GM12878 (cell line): ENCODE measurements at regions of chr13 and their contacts with region 1.

Region 1: DNA sequence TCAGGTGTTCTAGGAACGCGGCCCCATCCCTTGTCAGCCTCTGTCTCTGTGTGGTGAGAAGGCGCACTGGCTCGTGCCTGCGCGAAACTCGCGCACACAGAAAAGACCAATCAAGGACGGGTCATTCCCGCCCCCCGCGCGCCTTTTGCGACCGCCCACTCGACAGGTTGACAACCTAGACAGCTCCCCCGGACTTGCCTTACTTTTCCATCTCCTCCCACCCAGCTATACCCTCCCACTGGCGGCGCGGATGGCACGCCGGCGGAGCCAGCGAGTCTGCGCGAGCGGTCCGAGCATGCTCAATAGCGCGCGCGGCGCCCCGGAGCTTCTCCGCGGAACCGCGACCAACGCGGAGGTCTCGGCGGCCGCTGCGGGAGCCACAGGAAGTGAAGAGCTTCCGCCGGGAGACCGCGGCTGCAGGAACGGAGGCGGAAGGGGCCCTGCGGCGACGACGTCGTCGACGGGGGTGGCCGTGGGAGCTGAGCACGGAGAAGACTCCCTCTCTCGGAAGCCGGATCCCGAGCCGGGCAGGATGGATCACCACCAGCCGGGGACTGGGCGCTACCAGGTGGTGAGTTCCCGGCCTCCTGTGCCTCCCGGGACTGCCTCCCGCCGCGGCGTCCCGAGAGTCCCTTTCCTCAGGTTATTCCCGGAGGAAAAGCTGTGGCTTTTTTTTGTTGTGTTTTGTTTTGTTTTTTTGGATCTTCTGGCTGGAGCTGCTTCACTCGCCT is at the start of gene NDFIP2:
- DNase-seq: peak; percentile 58
- ATAC-seq: peak; percentile 89
- H3K4me3 ChIP-seq: peak within 1 kb of the TSS; percentile 97
- H3K27ac ChIP-seq: no peak within 1 kb of the TSS
- H3K4me1 ChIP-seq: peaks cover 4% of the 10 kb centered on the region; the same call in 1 of the 2 replicates
- H3K27me3 ChIP-seq: no peaks in the 10 kb centered on the region
- CTCF ChIP-seq: no peak
- EP300 ChIP-seq: peak; percentile 20 to 45; a peak in 2 of 4 replicates
- POLR2A ChIP-seq: peak; percentile 82
- RAD21 ChIP-seq: no peak
- polyA plus RNA-seq, gene NDFIP2: 23.0 to 30.7 TPM

Region 2: GRCh38 chr13:79246578-79246949 is 234.6 kb before region 1 on chr13:
- CTCF ChIA-PET with region 1: no interaction called
- POLR2A ChIA-PET with region 1: no interaction called
- RAD21 ChIA-PET with region 1: no interaction called
- SMC1A ChIA-PET with region 1: no interaction called
- in situ Hi-C with region 1: no loop called
- intact Hi-C with region 1: no loop called
- DNase-seq: no peak
- ATAC-seq: peak; percentile 79
- H3K4me3 ChIP-seq: no peak overlapping the region
- H3K27ac ChIP-seq: no peak overlapping the region
- H3K4me1 ChIP-seq: peaks cover 7% of the 10 kb centered on the region
- H3K27me3 ChIP-seq: no peaks in the 10 kb centered on the region
- CTCF ChIP-seq: peak; percentile 23 to 50 (median 42); a peak in 5 of 6 replicates
- EP300 ChIP-seq: no peak
- POLR2A ChIP-seq: no peak
- RAD21 ChIP-seq: peak; percentile 68

Region 3: GRCh38 chr13:79451500-79451962 is 29.6 kb before region 1 on chr13:
- CTCF ChIA-PET with region 1: interaction called, 6 read pairs
- POLR2A ChIA-PET with region 1: interaction called, 4 read pairs
- RAD21 ChIA-PET with region 1: interaction called, 11 read pairs
- SMC1A ChIA-PET with region 1: interaction called, 9 read pairs
- in situ Hi-C with region 1: no loop called
- intact Hi-C with region 1: no loop called
- DNase-seq: peak; percentile 71
- ATAC-seq: peak; percentile 100
- H3K4me3 ChIP-seq: no peak overlapping the region
- H3K27ac ChIP-seq: no peak overlapping the region
- H3K4me1 ChIP-seq: peaks cover 10% of the 10 kb centered on the region; the same call in 1 of the 2 replicates
- H3K27me3 ChIP-seq: no peaks in the 10 kb centered on the region
- CTCF ChIP-seq: no peak
- EP300 ChIP-seq: peak in 1 of 2 experiments; percentile 35; a peak in 1 of 4 replicates
- POLR2A ChIP-seq: no peak
- RAD21 ChIP-seq: no peak

Region 4: GRCh38 chr13:79468819-79469218 is 12.3 kb before region 1 on chr13:
- CTCF ChIA-PET with region 1: interaction called, 4 read pairs
- POLR2A ChIA-PET with region 1: interaction called, 9 read pairs
- RAD21 ChIA-PET with region 1: interaction called, 5 read pairs
- SMC1A ChIA-PET with region 1: interaction called, 12 read pairs
- in situ Hi-C with region 1: no loop called
- intact Hi-C with region 1: no loop called
- DNase-seq: no peak
- ATAC-seq: peak; percentile 92
- H3K4me3 ChIP-seq: no peak overlapping the region
- H3K27ac ChIP-seq: no peak overlapping the region
- H3K4me1 ChIP-seq: peaks cover 6% of the 10 kb centered on the region; the same call in 1 of the 2 replicates
- H3K27me3 ChIP-seq: no peaks in the 10 kb centered on the region
- CTCF ChIP-seq: no peak
- EP300 ChIP-seq: no peak; a peak in 1 of 4 replicates
- POLR2A ChIP-seq: no peak
- RAD21 ChIP-seq: no peak

Region 5: GRCh38 chr13:79491715-79492114 is 10.6 kb after region 1 on chr13:
- CTCF ChIA-PET with region 1: interaction called, 5 read pairs
- POLR2A ChIA-PET with region 1: interaction called, 8 read pairs
- RAD21 ChIA-PET with region 1: interaction called, 8 read pairs
- SMC1A ChIA-PET with region 1: interaction called, 41 read pairs
- in situ Hi-C with region 1: no loop called
- intact Hi-C with region 1: no loop called
- DNase-seq: no peak
- ATAC-seq: no peak
- H3K4me3 ChIP-seq: no peak overlapping the region
- H3K27ac ChIP-seq: no peak overlapping the region
- H3K4me1 ChIP-seq: peaks cover 4% of the 10 kb centered on the region
- H3K27me3 ChIP-seq: no peaks in the 10 kb centered on the region
- CTCF ChIP-seq: no peak
- EP300 ChIP-seq: no peak
- POLR2A ChIP-seq: no peak
- RAD21 ChIP-seq: no peak

Region 6: GRCh38 chr13:79501538-79502232 is 20.6 kb after region 1 on chr13:
- CTCF ChIA-PET with region 1: interaction called, 10 read pairs
- POLR2A ChIA-PET with region 1: interaction called, 8 read pairs
- RAD21 ChIA-PET with region 1: interaction called, 6 read pairs
- SMC1A ChIA-PET with region 1: interaction called, 61 read pairs
- in situ Hi-C with region 1: no loop called
- intact Hi-C with region 1: no loop called
- DNase-seq: no peak
- ATAC-seq: no peak
- H3K4me3 ChIP-seq: no peak overlapping the region
- H3K27ac ChIP-seq: no peak overlapping the region
- H3K4me1 ChIP-seq: no peaks in the 10 kb centered on the region; the same call in 1 of the 2 replicates
- H3K27me3 ChIP-seq: no peaks in the 10 kb centered on the region
- CTCF ChIP-seq: no peak
- EP300 ChIP-seq: no peak
- POLR2A ChIP-seq: no peak
- RAD21 ChIP-seq: no peak

Region 7: GRCh38 chr13:79522583-79522982 is 41.5 kb after region 1 on chr13:
- CTCF ChIA-PET with region 1: interaction called, 4 read pairs
- POLR2A ChIA-PET with region 1: no interaction called
- RAD21 ChIA-PET with region 1: interaction called, 3 read pairs
- SMC1A ChIA-PET with region 1: interaction called, 3 read pairs
- in situ Hi-C with region 1: no loop called
- intact Hi-C with region 1: loop called (anchors 5 kb)
- DNase-seq: peak; percentile 69
- ATAC-seq: peak; percentile 91
- H3K4me3 ChIP-seq: no peak overlapping the region
- H3K27ac ChIP-seq: no peak overlapping the region
- H3K4me1 ChIP-seq: peaks cover 6% of the 10 kb centered on the region
- H3K27me3 ChIP-seq: no peaks in the 10 kb centered on the region
- CTCF ChIP-seq: no peak
- EP300 ChIP-seq: peak in 1 of 2 experiments; percentile 57; a peak in 1 of 4 replicates
- POLR2A ChIP-seq: no peak
- RAD21 ChIP-seq: no peak

Region 8: DNA sequence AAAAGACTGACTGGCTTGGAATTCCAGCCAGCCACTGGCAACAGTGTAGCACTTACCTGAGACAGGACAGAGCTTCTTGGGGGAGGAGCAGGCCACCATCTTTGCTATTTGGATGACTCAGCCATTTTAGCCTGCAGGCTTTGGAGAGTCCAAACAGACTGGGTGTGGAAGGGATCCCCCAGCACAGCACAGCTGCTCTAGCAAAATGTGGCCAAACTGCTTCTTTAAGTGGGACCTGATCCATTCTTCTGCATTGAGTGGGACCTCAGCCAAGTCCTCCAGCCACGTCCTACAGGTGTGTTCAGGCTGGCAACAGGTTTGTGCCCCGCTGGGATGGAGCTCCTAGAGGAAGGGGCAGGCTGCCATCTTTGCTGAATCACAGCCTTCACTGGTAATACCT is 79.8 kb after region 1 on chr13:
- CTCF ChIA-PET with region 1: no interaction called
- POLR2A ChIA-PET with region 1: no interaction called
- RAD21 ChIA-PET with region 1: no interaction called
- SMC1A ChIA-PET with region 1: no interaction called
- in situ Hi-C with region 1: no loop called
- intact Hi-C with region 1: no loop called
- DNase-seq: no peak
- ATAC-seq: no peak
- H3K4me3 ChIP-seq: no peak overlapping the region
- H3K27ac ChIP-seq: no peak overlapping the region
- H3K4me1 ChIP-seq: no peaks in the 10 kb centered on the region
- H3K27me3 ChIP-seq: no peaks in the 10 kb centered on the region
- CTCF ChIP-seq: no peak
- EP300 ChIP-seq: no peak
- POLR2A ChIP-seq: no peak
- RAD21 ChIP-seq: no peak